CD4-positive, alpha-beta T cell (primary cell): ENCODE measurements at regions of chr19 and their contacts with region 1.

Region 1: DNA sequence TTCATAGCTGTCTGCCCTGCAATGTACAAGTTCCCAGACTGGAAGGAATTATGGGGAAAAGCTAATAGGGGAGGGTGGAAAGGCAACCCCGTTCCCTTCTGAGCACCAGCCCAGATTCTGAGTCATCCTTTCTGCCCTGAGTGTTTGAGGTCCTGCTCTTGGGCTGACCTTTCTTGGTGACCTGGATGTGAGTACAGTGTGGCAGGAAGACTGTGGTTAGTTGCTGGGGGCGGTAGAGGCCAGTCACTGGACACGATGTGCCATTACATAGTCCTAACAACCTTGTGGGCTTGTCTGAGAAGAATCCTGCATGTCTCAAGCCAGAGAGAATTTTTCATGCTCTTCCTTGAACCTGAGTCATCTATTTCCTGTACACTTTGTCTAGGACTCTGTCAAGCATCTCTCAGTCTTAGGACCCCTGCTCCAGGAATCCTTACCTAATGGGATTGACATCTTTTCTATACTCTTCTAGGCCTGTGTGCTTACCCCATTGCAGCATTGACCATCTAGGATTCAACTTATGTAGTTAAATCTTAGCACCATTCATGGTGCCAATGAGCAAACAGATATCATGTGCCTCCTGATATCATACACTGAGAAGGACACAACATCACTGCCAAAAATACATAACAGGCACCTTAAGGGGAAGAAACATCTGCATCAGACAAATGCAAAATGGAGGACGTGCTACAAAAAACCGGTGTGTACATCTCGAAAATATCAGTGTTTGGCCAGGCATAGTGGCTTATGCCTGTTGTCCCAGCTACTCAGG is 8.1 kb upstream of the ANGPTL4 start:
- DNase-seq: no peak
- ATAC-seq: no peak
- H3K4me3 ChIP-seq: no peak overlapping the region
- H3K4me3 Mint-ChIP-seq: no peak overlapping the region
- H3K27ac ChIP-seq: no peak overlapping the region
- H3K27ac Mint-ChIP-seq: no peak overlapping the region
- H3K4me1 ChIP-seq: peaks cover 6% of the 10 kb centered on the region
- H3K4me1 Mint-ChIP-seq: peaks cover 4% of the 10 kb centered on the region
- H3K27me3 ChIP-seq: peaks cover 5 to 14% of the 10 kb centered on the region in 2 experiments
- H3K27me3 Mint-ChIP-seq: peaks cover 14% of the 10 kb centered on the region
- CTCF ChIP-seq: no peak

Region 2: GRCh38 chr19:8342684-8343482 is 12.9 kb before region 1 on chr19 and contains the start of gene KANK3:
- CTCF ChIA-PET with region 1: interaction called, 17 read pairs
- POLR2A ChIA-PET with region 1: no interaction called
- intact Hi-C with region 1: no loop called
- DNase-seq: peak; percentile 83 to 96 (median 90)
- ATAC-seq: peak; percentile 100
- H3K4me3 ChIP-seq: peak within 1 kb of the TSS; percentile 83
- H3K4me3 Mint-ChIP-seq: peak within 1 kb of the TSS; percentile 81
- H3K27ac ChIP-seq: peak within 1 kb of the TSS in 1 of 2 donors; percentile 40
- H3K27ac Mint-ChIP-seq: no peak within 1 kb of the TSS
- H3K4me1 ChIP-seq: peaks cover 21% of the 10 kb centered on the region
- H3K4me1 Mint-ChIP-seq: peaks cover 8% of the 10 kb centered on the region
- H3K27me3 ChIP-seq: no peaks in the 10 kb centered on the region
- H3K27me3 Mint-ChIP-seq: peaks cover 17% of the 10 kb centered on the region
- CTCF ChIP-seq: no peak
- total RNA-seq, gene KANK3: 0.87 to 1.1 TPM

Region 3: DNA sequence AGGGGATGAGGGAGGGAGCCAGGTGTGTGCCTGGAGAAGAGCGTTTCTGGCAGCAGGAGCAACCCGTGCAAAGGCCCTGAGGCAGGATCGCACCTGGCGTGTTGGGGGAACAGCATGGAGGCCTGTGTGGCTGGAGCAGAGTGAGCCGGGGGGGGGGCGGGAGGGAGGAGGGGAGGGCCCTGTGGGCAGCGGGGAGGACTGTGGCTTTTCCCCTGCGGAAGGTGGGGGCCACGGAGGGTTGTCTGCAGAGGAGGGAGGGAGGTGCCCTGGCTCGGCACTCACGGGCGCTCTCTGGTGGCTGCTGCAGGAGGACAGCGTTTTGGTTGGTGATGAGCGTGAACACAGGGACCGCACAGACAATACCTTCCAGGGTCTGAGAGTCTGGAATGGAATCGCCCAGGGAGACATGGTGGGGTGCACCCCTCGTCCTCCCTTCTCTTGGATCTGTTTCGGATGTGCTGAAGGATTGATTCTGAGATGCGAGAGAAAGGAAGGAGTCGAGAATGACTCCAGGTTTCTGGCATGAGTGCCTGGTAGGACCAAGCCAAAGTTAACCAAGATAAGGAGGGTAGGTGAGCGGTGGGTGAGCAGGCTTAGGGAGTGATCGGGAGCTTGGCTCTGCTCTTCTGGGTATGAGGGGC is 40.9 kb after region 1 on chr19:
- CTCF ChIA-PET with region 1: interaction called, 6 read pairs
- POLR2A ChIA-PET with region 1: no interaction called
- intact Hi-C with region 1: loop called (anchors 1 kb)
- DNase-seq: peak; percentile 38 to 89 (median 58)
- ATAC-seq: peak; percentile 97
- H3K4me3 ChIP-seq: no peak overlapping the region
- H3K4me3 Mint-ChIP-seq: peak overlapping the region; percentile 16
- H3K27ac ChIP-seq: no peak overlapping the region
- H3K27ac Mint-ChIP-seq: peak overlapping the region; percentile 74
- H3K4me1 ChIP-seq: peaks cover 30% of the 10 kb centered on the region
- H3K4me1 Mint-ChIP-seq: peaks cover 27% of the 10 kb centered on the region
- H3K27me3 ChIP-seq: no peaks in the 10 kb centered on the region
- H3K27me3 Mint-ChIP-seq: no peaks in the 10 kb centered on the region
- CTCF ChIP-seq: peak; percentile 59

Region 4: GRCh38 chr19:8505680-8506401 is 150.0 kb after region 1 on chr19:
- CTCF ChIA-PET with region 1: interaction called, 3 read pairs
- POLR2A ChIA-PET with region 1: no interaction called
- intact Hi-C with region 1: loop called in 1 of 2 experiments (anchors 1 kb)
- DNase-seq: peak; percentile 47 to 86 (median 67)
- ATAC-seq: peak; percentile 77
- H3K4me3 ChIP-seq: peak overlapping the region; percentile 75
- H3K4me3 Mint-ChIP-seq: peak overlapping the region; percentile 93
- H3K27ac ChIP-seq: peak overlapping the region; percentile 5 to 46
- H3K27ac Mint-ChIP-seq: peak overlapping the region; percentile 85
- H3K4me1 ChIP-seq: peaks cover 40% of the 10 kb centered on the region
- H3K4me1 Mint-ChIP-seq: peaks cover 22% of the 10 kb centered on the region
- H3K27me3 ChIP-seq: no peaks in the 10 kb centered on the region
- H3K27me3 Mint-ChIP-seq: no peaks in the 10 kb centered on the region
- CTCF ChIP-seq: peak; percentile 73

Region 5: DNA sequence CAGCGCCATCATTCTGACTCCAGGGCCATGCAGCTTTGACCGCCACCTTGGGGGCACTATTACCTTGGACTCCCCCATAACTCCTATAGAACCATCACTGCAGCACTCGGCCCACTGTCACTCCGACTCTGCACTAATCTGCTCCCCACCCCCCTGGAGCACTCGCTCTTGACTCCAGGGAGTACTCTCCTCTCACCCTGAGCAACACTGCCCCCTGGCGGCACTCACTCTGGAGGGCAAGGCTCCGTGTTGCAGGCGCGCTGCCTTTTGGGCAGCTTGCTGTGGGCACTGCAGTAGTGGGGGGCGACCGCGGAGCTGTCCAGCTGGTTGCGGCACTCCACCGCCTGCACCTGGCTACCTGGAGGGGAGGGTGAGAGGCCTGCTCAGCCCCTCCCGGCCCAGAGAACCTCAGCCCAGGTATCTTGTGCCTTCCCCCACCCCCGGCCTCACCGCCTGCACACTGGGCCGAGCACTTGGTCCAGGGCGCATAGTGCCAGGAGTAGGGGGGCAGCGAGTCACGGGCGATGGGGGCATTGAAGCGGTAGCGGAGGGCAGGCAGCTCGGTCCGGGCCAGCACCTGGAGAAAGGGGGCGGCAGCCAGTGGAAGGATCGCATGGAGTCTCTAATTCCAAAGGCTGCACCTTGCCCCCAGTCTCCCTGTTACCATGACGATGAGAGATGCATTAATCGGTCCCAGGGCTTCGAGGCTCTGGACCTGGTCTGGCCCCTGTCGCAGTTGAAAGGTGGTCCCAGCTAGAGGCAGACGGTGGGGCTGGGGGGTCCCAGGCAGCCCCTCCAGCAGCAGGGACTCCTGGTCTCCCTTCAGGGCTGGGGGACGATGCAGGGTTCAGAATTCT is 230.3 kb after region 1 on chr19:
- CTCF ChIA-PET with region 1: interaction called, 3 read pairs
- POLR2A ChIA-PET with region 1: no interaction called
- intact Hi-C with region 1: loop called (anchors 1 to 10 kb)
- DNase-seq: peak; percentile 44 to 76 (median 55)
- ATAC-seq: peak; percentile 69
- H3K4me3 ChIP-seq: no peak overlapping the region
- H3K4me3 Mint-ChIP-seq: no peak overlapping the region
- H3K27ac ChIP-seq: no peak overlapping the region
- H3K27ac Mint-ChIP-seq: no peak overlapping the region
- H3K4me1 ChIP-seq: peaks cover 1% of the 10 kb centered on the region
- H3K4me1 Mint-ChIP-seq: no peaks in the 10 kb centered on the region
- H3K27me3 ChIP-seq: no peaks in the 10 kb centered on the region
- H3K27me3 Mint-ChIP-seq: no peaks in the 10 kb centered on the region
- CTCF ChIP-seq: peak; percentile 56

Region 6: GRCh38 chr19:8641908-8642547 is 286.2 kb after region 1 on chr19:
- CTCF ChIA-PET with region 1: interaction called, 6 read pairs
- POLR2A ChIA-PET with region 1: no interaction called
- intact Hi-C with region 1: loop called (anchors 1 to 2 kb)
- DNase-seq: peak in 4 of 14 experiments; percentile 34 to 72 (median 65)
- ATAC-seq: peak; percentile 68
- H3K4me3 ChIP-seq: no peak overlapping the region
- H3K4me3 Mint-ChIP-seq: no peak overlapping the region
- H3K27ac ChIP-seq: no peak overlapping the region
- H3K27ac Mint-ChIP-seq: no peak overlapping the region
- H3K4me1 ChIP-seq: peaks cover 11% of the 10 kb centered on the region
- H3K4me1 Mint-ChIP-seq: no peaks in the 10 kb centered on the region
- H3K27me3 ChIP-seq: peaks cover 4 to 7% of the 10 kb centered on the region in 2 experiments
- H3K27me3 Mint-ChIP-seq: peaks cover 39% of the 10 kb centered on the region
- CTCF ChIP-seq: peak; percentile 69

Region 7: GRCh38 chr19:9075064-9075949 is 719.5 kb after region 1 on chr19:
- CTCF ChIA-PET with region 1: no interaction called
- POLR2A ChIA-PET with region 1: no interaction called
- intact Hi-C with region 1: loop called in 1 of 2 experiments (anchors 10 kb)
- DNase-seq: no peak
- ATAC-seq: no peak
- H3K4me3 ChIP-seq: no peak overlapping the region
- H3K4me3 Mint-ChIP-seq: no peak overlapping the region
- H3K27ac ChIP-seq: no peak overlapping the region
- H3K27ac Mint-ChIP-seq: no peak overlapping the region
- H3K4me1 ChIP-seq: peaks cover 5% of the 10 kb centered on the region
- H3K4me1 Mint-ChIP-seq: no peaks in the 10 kb centered on the region
- H3K27me3 ChIP-seq: no peaks in the 10 kb centered on the region
- H3K27me3 Mint-ChIP-seq: no peaks in the 10 kb centered on the region
- CTCF ChIP-seq: no peak